T-cell (primary cell): ENCODE measurements at regions of chr17 and their contacts with region 1.

Region 1: DNA sequence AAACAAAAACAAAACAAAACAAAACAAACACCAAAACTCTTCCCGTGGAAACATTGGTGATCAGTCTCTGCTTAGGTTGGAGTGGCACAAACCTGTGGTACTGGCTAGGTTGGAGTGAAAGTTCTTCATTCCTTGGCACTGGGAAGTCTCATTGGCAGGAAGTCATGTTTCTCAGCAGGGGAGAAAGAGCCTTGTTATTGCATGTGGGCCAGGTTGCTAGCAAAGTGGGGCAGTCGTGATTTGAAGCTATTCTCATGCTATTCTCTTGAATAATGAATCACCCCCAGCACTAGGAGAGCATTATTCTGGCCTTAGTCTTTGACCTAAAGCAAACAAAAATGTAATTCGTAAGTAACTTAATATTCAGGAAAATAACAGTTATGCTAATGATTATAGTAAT is 24.3 kb upstream of the B4GALNT2 start:
- DNase-seq: no peak
- ATAC-seq: no peak
- H3K4me3 ChIP-seq: no peak overlapping the region
- H3K4me3 Mint-ChIP-seq: no peak overlapping the region
- H3K27ac ChIP-seq: no peak overlapping the region
- H3K27ac Mint-ChIP-seq: no peak overlapping the region
- H3K4me1 ChIP-seq: no peaks in the 10 kb centered on the region
- H3K4me1 Mint-ChIP-seq: peaks cover 0 to 4% (median 2%) of the 10 kb centered on the region in 3 donors
- H3K27me3 ChIP-seq: peaks cover 1 to 2% of the 10 kb centered on the region in 2 experiments
- H3K27me3 Mint-ChIP-seq: peaks cover 3 to 16% of the 10 kb centered on the region in 2 donors

Region 2: GRCh38 chr17:48671697-48672171 is 436.6 kb before region 1 on chr17:
- CTCF ChIA-PET with region 1: no interaction called
- POLR2A ChIA-PET with region 1: interaction called in 1 of 2 experiments, 11 read pairs
- DNase-seq: peak; percentile 11 to 81 (median 60)
- ATAC-seq: peak; percentile 68 to 82 (median 78)
- H3K4me3 ChIP-seq: no peak overlapping the region
- H3K4me3 Mint-ChIP-seq: peak overlapping the region in 2 of 3 donors; percentile 17 to 42
- H3K27ac ChIP-seq: no peak overlapping the region
- H3K27ac Mint-ChIP-seq: no peak overlapping the region
- H3K4me1 ChIP-seq: peaks cover 0 to 9% of the 10 kb centered on the region in 2 experiments
- H3K4me1 Mint-ChIP-seq: peaks cover 5 to 6% (median 5%) of the 10 kb centered on the region in 3 donors
- H3K27me3 ChIP-seq: peaks cover 4 to 36% of the 10 kb centered on the region in 2 experiments
- H3K27me3 Mint-ChIP-seq: peaks cover 41 to 47% of the 10 kb centered on the region in 2 donors

Region 3: DNA sequence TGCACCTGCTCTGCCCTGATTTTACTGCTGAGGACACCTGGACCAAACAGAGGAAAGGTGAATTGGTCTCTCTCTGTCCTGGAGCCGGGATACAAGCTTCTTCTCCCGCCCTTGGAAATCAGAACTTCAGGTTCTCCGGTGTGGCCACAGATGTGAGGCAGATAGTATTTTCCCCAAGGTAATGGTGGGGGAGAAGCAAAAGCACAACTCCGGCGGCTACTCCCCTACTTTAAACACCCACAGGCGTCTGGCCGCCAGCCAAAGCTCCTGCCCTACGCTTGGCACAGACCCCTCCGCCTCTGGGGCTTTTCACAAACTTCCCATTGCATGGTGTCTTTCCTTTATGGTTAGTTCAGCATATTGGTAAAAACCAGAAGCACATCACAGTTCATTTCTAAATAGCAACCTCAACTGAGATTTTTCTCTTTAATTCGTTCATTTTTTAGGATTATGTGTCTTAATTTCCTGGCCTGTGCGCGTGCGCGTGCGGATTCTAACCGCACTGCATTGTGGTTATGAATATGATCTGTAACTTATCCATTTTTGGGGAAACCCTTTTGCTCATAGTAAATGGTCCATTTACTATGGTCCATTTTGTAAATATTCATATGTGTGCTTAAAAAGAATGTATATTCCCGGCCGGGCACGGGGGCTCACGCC is 15.1 kb before region 1 on chr17:
- CTCF ChIA-PET with region 1: no interaction called
- POLR2A ChIA-PET with region 1: no interaction called
- DNase-seq: no peak
- ATAC-seq: no peak
- H3K4me3 ChIP-seq: no peak overlapping the region
- H3K4me3 Mint-ChIP-seq: no peak overlapping the region
- H3K27ac ChIP-seq: no peak overlapping the region
- H3K27ac Mint-ChIP-seq: no peak overlapping the region
- H3K4me1 ChIP-seq: no peaks in the 10 kb centered on the region
- H3K4me1 Mint-ChIP-seq: no peaks in the 10 kb centered on the region
- H3K27me3 ChIP-seq: peaks cover 0 to 9% of the 10 kb centered on the region in 2 experiments
- H3K27me3 Mint-ChIP-seq: peaks cover 8 to 13% of the 10 kb centered on the region in 2 donors

Region 4: DNA sequence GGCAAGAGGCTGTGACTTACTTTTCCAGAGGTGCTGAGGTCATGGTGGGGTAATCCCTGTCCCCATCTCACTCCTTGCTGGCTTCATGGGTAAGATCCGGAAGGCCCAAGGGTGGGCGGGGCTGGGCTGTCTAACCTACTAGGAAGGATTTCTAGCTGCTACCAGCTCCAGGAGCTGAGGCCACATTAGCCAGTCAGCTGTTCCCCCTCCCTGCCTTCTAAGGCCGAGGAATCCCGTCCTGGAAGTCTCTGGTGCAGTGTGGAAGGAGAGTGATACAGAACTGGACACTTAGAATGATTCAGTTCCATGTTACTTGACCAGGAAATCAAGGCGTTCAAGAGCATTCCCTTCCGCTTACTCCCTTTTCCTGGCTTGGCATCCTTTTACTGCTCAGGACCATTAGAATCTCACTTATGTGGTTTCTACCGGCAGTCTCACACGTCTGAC is 93.2 kb after region 1 on chr17:
- CTCF ChIA-PET with region 1: no interaction called
- POLR2A ChIA-PET with region 1: no interaction called
- DNase-seq: no peak
- ATAC-seq: no peak
- H3K4me3 ChIP-seq: no peak overlapping the region
- H3K4me3 Mint-ChIP-seq: no peak overlapping the region
- H3K27ac ChIP-seq: no peak overlapping the region
- H3K27ac Mint-ChIP-seq: no peak overlapping the region
- H3K4me1 ChIP-seq: no peaks in the 10 kb centered on the region
- H3K4me1 Mint-ChIP-seq: peaks cover 0 to 2% (median 0%) of the 10 kb centered on the region in 3 donors
- H3K27me3 ChIP-seq: no peaks in the 10 kb centered on the region
- H3K27me3 Mint-ChIP-seq: no peaks in the 10 kb centered on the region